ENCODE measurements at regions of chr5 and their contacts with region 1.

Region 1: GRCh38 chr5:181223058-181223728 is at the start of gene TRIM41:
- DNase-seq: peak; percentile 99
- ATAC-seq: peak; percentile 91
- total RNA-seq, gene TRIM41: 20.9 TPM

Region 2: GRCh38 chr5:181207214-181208107 is 15.7 kb before region 1 on chr5:
- intact Hi-C with region 1: loop called (anchors 1 kb)
- DNase-seq: no peak
- ATAC-seq: peak; percentile 48

Region 3: DNA sequence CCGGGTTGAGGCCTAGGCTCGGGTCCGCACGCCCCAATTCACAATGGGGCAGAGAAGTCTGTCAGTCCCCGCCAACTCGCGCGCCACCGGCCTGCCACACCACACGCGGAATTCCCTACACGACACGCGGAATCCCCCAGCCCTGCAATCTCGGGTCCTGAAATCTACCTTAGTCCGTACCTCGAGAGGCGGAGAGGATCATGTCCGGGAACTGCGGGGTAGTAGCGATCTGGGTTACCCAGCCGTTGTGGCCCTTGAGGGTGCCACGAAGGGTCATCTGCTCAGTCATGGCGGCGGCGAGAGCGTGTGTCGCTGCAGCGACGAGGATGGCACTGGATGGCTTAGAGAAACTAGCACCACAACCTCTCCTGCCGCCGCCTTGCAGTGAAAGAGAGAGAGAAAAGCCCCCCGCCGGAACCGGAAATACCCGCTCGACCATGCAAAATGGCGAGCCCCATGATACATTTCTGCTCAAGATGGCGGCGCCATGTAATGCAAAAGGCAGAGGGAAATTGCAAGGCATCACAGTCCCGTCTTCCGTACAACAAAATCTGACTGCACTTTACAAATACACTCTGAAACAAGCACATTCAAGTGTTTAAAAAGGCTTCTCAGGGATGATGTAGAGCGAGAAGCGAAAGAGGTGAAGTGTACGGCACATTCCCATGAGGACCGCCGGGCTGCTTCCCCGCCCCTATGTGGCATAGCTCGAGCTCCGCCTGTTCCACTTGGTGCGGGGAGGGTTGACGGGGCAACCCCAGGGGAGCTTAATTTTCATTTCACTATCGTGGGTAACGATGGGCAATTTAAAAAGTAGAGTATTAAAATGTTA is 20.5 kb after region 1 on chr5 and contains the start of gene RACK1:
- intact Hi-C with region 1: loop called (anchors 1 kb)
- DNase-seq: peak; percentile 92
- ATAC-seq: peak; percentile 78
- total RNA-seq, gene RACK1: 693 TPM

Region 4: DNA sequence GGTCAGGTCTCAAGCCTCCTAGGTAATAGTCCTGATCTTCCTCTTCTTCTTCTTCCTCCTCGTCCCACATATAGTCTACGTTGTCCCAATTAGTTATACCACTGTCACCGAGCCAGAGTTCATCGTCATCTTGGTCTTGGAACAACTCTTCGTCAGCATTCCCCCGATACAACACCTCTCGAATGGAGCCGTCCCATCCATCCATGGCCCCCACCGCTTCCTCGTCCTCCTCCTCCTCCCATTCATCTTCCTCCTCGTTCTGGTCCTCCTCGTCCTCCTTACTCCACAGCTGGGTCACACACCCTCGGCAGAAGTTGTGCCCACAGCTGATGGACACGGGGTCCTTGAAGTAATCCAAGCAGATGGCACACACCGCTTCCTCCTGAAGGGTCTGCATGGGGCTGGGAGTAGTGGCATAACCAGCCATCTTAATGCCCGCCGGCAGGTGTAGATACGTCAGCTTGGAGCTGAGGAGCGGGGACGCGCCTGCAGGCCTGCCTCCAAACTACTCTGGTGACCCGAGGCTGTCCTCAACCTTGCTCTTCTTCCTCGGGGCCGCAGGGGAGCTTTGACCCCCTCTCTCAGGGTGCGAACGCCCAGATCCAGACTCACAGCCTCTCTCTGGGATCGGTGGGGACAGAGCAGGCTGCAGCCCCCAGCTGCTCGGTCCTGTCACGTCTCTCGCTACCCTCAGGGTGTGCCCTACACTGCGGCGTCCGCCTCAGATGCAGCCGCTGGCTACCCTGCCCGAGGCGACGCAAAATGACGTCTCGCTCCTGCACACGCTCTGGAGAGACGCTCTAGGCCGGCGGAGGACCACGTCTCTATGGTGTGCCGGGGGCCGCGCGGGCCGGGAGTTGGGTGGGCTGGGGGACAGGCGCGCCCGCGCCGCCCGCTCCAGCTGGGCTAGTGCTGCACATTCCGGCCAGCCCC is 37.5 kb after region 1 on chr5 and contains the start of gene TRIM52:
- intact Hi-C with region 1: loop called (anchors 1 kb)
- DNase-seq: peak; percentile 97
- ATAC-seq: peak; percentile 94
- total RNA-seq, gene TRIM52: 9.2 TPM

Region 5: DNA sequence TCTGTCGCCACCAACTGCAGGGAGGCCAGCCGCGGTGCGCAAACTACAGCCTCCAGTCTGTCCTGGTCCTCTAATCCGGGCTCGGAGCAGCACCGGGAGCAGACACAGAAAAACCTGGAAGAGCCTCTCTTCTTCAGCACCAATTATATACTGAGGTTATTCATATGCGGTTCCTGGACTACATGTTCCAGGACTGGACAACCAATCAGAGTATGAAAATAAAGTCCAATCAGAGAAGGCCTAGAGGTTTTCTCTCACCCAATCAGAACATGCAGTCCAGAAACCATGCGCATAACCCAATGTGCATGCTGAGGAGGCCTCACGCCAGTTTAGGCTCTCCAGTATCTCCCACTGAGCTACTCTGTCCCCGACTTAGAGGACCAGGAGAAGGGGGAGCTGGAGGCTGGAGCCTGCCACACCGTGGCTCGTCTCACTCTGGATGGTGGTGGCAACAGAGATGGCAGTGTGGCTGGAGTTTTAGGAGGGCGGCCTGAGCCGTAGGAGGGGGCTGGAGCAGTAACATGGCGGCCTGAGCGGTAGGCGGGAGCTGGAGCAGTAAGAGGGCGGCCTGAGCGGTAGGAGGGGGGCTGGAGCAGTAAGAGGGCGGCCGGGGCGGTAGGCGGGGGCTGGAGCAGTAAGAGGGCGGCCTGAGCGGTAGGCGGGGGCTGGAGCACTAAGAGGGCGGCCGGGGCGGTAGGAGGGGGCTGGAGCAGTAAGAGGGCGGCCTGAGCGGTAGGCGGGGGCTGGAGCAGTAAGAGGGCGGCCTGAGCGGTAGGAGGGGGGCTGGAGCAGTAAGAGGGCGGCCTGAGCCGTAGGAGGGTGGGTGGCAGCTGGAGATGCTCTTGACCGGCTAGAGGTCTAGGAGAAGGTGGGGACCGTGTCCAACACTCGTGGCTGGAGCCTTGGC is 58.1 kb after region 1 on chr5:
- intact Hi-C with region 1: no loop called
- DNase-seq: peak; percentile 27
- ATAC-seq: no peak